ENCODE measurements at regions of chr1 and their contacts with region 1.

Region 1: GRCh38 chr1:154546264-154547063 is 12.0 kb downstream of the UBE2Q1 start:
- DNase-seq: peak; percentile 73
- H3K4me3 ChIP-seq: no peak overlapping the region
- H3K27ac ChIP-seq: no peak overlapping the region
- H3K4me1 ChIP-seq: peaks cover 6% of the 10 kb centered on the region
- H3K27me3 ChIP-seq: no peaks in the 10 kb centered on the region
- CTCF ChIP-seq: peak; percentile 74 to 88
- POLR2A ChIP-seq: no peak

Region 2: GRCh38 chr1:154344977-154345837 is 201.3 kb before region 1 on chr1:
- CTCF ChIA-PET with region 1: interaction called, 10 read pairs
- POLR2A ChIA-PET with region 1: no interaction called
- dilution Hi-C with region 1: no loop called
- intact Hi-C with region 1: no loop called
- DNase-seq: peak; percentile 41
- H3K4me3 ChIP-seq: no peak overlapping the region
- H3K27ac ChIP-seq: no peak overlapping the region
- H3K4me1 ChIP-seq: peaks cover 6% of the 10 kb centered on the region
- H3K27me3 ChIP-seq: no peaks in the 10 kb centered on the region
- CTCF ChIP-seq: peak; percentile 77 to 80
- POLR2A ChIP-seq: no peak

Region 3: GRCh38 chr1:154419620-154420571 is 126.6 kb before region 1 on chr1:
- CTCF ChIA-PET with region 1: interaction called, 13 read pairs
- POLR2A ChIA-PET with region 1: no interaction called
- dilution Hi-C with region 1: no loop called
- intact Hi-C with region 1: no loop called
- DNase-seq: peak; percentile 96
- H3K4me3 ChIP-seq: no peak overlapping the region
- H3K27ac ChIP-seq: peak overlapping the region; percentile 89
- H3K4me1 ChIP-seq: peaks cover 43% of the 10 kb centered on the region
- H3K27me3 ChIP-seq: no peaks in the 10 kb centered on the region
- CTCF ChIP-seq: no peak
- POLR2A ChIP-seq: no peak

Region 4: DNA sequence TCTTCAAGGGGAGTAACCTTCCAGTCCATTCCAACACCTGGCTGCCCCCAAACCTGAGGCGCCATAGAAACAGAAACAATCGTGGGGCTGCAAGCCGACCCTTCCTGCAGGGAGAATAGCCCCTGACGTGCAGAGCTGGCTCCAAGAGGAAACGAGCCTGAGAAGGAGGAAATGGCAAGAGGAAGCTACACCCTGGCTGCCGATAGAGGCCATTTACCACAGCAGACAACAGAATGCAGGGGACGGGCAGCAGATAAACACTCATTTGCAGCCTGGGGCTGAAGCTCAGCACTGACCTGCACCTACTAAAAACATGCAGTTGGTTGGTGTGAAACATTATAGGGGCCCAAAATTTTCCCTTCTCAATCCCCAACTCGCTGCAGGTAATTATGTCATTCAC is 53.2 kb before region 1 on chr1:
- CTCF ChIA-PET with region 1: interaction called, 66 read pairs
- POLR2A ChIA-PET with region 1: interaction called, 4 read pairs
- dilution Hi-C with region 1: no loop called
- intact Hi-C with region 1: loop called (anchors 1 kb)
- DNase-seq: peak; percentile 84
- H3K4me3 ChIP-seq: peak overlapping the region in 1 of 3 experiments; percentile 3
- H3K27ac ChIP-seq: peak overlapping the region; percentile 89
- H3K4me1 ChIP-seq: peaks cover 89% of the 10 kb centered on the region
- H3K27me3 ChIP-seq: no peaks in the 10 kb centered on the region
- CTCF ChIP-seq: no peak
- POLR2A ChIP-seq: peak; percentile 75

Region 5: DNA sequence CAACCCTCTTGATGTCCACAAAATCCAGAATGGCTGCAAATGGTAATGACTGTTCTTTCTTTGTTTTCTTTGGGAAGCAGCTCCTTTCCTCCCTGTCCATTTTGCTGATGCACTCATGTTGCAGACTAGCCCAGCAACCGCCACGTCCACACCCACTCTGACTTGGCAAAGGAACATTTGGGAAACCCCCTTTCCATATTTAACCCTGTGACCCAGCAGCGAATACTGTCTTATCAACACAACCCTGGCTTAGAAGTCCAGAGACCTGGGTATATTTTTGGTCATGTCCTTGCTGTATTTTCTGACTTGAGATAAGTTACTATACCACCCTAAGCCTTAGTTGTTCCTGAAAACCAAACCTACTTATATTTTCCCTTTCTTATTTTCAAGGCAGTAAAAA is 26.1 kb before region 1 on chr1:
- CTCF ChIA-PET with region 1: interaction called, 18 read pairs
- POLR2A ChIA-PET with region 1: no interaction called
- dilution Hi-C with region 1: no loop called
- intact Hi-C with region 1: no loop called
- DNase-seq: peak; percentile 66
- H3K4me3 ChIP-seq: no peak overlapping the region
- H3K27ac ChIP-seq: no peak overlapping the region
- H3K4me1 ChIP-seq: peaks cover 18% of the 10 kb centered on the region
- H3K27me3 ChIP-seq: no peaks in the 10 kb centered on the region
- CTCF ChIP-seq: no peak
- POLR2A ChIP-seq: no peak

Region 6: GRCh38 chr1:155323798-155324610 is 777.5 kb after region 1 on chr1:
- CTCF ChIA-PET with region 1: no interaction called
- POLR2A ChIA-PET with region 1: no interaction called
- dilution Hi-C with region 1: no loop called
- intact Hi-C with region 1: no loop called
- DNase-seq: peak; percentile 95
- H3K4me3 ChIP-seq: peak overlapping the region; percentile 61 to 76 (median 70)
- H3K27ac ChIP-seq: peak overlapping the region; percentile 40
- H3K4me1 ChIP-seq: peaks cover 41% of the 10 kb centered on the region
- H3K27me3 ChIP-seq: no peaks in the 10 kb centered on the region
- CTCF ChIP-seq: no peak
- POLR2A ChIP-seq: peak; percentile 56